CD4-positive, alpha-beta memory T cell (primary cell): ENCODE measurements at regions of chr9 and their contacts with region 1.

Region 1: GRCh38 chr9:21031091-21031807 is at the start of gene HACD4:
- DNase-seq: peak; percentile 69 to 77 (median 74)
- H3K4me3 ChIP-seq: peak within 1 kb of the TSS; percentile 74 to 85
- H3K4me3 Mint-ChIP-seq: peak within 1 kb of the TSS in 6 of 8 donors; percentile 79 to 85 (median 81)
- H3K27ac ChIP-seq: peak within 1 kb of the TSS; percentile 64
- H3K27ac Mint-ChIP-seq: peak within 1 kb of the TSS in 6 of 7 donors; percentile 76 to 93 (median 86)
- H3K4me1 ChIP-seq: peaks cover 44% of the 10 kb centered on the region
- H3K4me1 Mint-ChIP-seq: peaks cover 21 to 33% (median 27%) of the 10 kb centered on the region in 4 donors
- H3K27me3 ChIP-seq: no peaks in the 10 kb centered on the region
- H3K27me3 Mint-ChIP-seq: no peaks in the 10 kb centered on the region
- total RNA-seq, gene HACD4: 16.0 to 18.3 TPM

Region 2: GRCh38 chr9:19408693-19409400 is 1622.4 kb before region 1 on chr9 and contains the start of gene ACER2:
- CTCF ChIA-PET with region 1: no interaction called
- POLR2A ChIA-PET with region 1: no interaction called
- intact Hi-C with region 1: loop called (anchors 10 kb)
- DNase-seq: peak; percentile 91 to 97 (median 93)
- H3K4me3 ChIP-seq: peak within 1 kb of the TSS; percentile 94 to 100
- H3K4me3 Mint-ChIP-seq: peak within 1 kb of the TSS; percentile 91 to 96 (median 96)
- H3K27ac ChIP-seq: peak within 1 kb of the TSS; percentile 69
- H3K27ac Mint-ChIP-seq: peak within 1 kb of the TSS; percentile 65 to 94 (median 90)
- H3K4me1 ChIP-seq: peaks cover 23% of the 10 kb centered on the region
- H3K4me1 Mint-ChIP-seq: peaks cover 5 to 24% (median 16%) of the 10 kb centered on the region in 4 donors
- H3K27me3 ChIP-seq: no peaks in the 10 kb centered on the region
- H3K27me3 Mint-ChIP-seq: no peaks in the 10 kb centered on the region
- total RNA-seq, gene ACER2: 5.9 to 6.0 TPM

Region 3: DNA sequence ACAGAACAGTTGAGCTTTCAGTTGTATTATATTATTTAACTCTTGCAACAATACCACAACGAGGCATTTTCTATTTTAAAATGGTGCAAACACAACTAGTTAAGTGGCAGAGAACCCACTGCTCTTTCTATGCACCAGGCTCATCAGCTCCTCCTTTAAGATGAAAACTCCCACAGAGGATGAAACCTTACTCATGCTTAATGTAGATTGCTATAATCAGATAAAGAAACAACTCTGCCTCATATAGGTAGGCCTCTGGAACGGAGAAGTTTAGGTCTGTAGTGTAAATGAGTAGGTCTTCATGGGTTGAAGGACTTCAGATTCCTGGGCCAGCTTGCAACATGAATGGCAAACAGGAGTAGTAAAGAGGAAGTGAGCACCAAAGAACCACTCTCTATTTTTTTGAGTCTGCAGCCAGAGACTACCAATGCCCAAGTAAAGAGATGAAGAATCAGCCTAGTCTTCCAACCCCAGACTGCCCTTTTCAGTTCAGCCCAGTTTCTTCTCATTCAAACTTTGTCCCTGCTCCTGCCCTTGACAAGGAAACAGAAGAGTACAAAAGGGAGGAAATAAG is 33.7 kb before region 1 on chr9:
- CTCF ChIA-PET with region 1: interaction called, 5 read pairs
- POLR2A ChIA-PET with region 1: interaction called, 22 read pairs
- intact Hi-C with region 1: loop called (anchors 1 kb)
- DNase-seq: no peak
- H3K4me3 ChIP-seq: no peak overlapping the region
- H3K4me3 Mint-ChIP-seq: peak overlapping the region in 3 of 8 donors; percentile 13 to 68 (median 32)
- H3K27ac ChIP-seq: no peak overlapping the region
- H3K27ac Mint-ChIP-seq: peak overlapping the region; percentile 8 to 88 (median 76)
- H3K4me1 ChIP-seq: peaks cover 37% of the 10 kb centered on the region
- H3K4me1 Mint-ChIP-seq: peaks cover 39 to 53% (median 50%) of the 10 kb centered on the region in 4 donors
- H3K27me3 ChIP-seq: no peaks in the 10 kb centered on the region
- H3K27me3 Mint-ChIP-seq: no peaks in the 10 kb centered on the region

Region 4: DNA sequence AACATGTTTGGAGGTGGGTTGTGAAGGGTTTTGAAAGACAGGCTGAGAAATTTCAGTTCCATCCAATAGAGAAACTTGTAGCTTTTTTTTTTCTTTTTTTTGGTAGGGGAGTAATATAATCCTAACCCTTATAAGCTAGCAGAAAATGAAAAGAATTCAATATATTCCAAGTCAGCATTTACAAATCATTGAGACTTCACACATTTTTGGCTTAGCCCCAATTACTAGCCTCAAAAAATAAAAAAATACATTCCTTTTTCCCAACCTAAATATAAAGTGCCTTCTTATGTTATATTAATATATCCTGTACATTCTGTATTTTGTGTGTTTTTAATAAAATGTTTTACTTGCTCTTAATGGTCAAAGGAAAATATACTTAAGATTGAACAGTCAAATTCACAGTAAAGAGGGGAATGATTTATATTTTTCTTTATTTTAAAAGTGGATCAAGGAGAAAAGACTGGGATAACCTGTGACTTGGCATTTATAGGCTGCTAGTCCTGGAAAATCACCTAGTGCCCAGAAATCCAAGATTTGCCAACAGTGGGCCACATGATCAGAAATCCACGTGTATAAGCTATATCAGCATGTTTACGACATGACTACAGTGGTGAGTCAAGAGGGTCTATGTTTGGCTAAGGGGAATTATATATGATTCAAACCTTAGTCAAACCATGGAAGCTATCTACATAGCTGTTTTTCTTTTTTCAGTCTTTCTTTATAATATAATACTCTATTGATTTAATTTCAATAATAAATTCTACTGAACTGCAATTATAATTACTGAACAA is 14.4 kb before region 1 on chr9:
- CTCF ChIA-PET with region 1: interaction called, 4 read pairs
- POLR2A ChIA-PET with region 1: interaction called, 13 read pairs
- intact Hi-C with region 1: no loop called
- DNase-seq: no peak
- H3K4me3 ChIP-seq: no peak overlapping the region
- H3K4me3 Mint-ChIP-seq: no peak overlapping the region
- H3K27ac ChIP-seq: no peak overlapping the region
- H3K27ac Mint-ChIP-seq: peak overlapping the region in 1 of 7 donors; percentile 13
- H3K4me1 ChIP-seq: no peaks in the 10 kb centered on the region
- H3K4me1 Mint-ChIP-seq: peaks cover 12 to 25% (median 18%) of the 10 kb centered on the region in 4 donors
- H3K27me3 ChIP-seq: no peaks in the 10 kb centered on the region
- H3K27me3 Mint-ChIP-seq: no peaks in the 10 kb centered on the region

Region 5: DNA sequence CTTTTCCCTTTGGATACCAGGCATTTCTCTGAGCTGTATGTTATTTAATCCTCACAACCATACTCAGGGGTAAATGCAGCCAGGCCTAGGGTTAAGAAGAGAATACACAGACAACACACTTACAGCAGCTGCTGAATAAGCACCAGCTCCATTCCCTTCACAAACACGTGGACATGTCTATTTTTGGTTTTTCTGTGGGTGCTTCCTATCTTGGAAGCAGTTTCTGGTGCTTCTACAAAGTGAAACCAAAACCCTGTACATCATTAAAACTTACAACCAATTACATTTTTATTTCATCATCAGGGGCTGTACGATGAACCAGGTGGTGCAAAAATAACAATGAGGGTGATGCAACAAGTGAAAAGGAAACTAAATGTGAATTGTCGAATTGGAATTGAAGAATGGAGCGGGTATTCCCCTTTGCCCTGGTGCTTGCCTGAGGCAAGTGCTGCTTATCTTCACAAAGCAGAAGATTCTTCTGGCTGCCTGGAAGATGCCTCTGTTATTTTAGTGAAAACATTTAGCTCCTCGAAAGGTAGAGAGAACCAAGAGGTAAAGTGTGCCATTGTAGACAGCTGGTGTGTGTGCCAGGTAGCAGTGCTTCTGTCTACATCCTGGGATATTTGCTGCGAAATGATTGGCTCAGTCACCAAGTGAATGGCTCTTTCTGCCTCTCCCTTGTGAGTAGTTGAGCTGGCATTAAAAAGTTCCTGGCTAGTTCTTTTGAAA is 65.1 kb after region 1 on chr9:
- CTCF ChIA-PET with region 1: interaction called, 3 read pairs
- POLR2A ChIA-PET with region 1: interaction called, 12 read pairs
- intact Hi-C with region 1: loop called (anchors 5 kb)
- DNase-seq: peak; percentile 65 to 81 (median 73)
- H3K4me3 ChIP-seq: peak overlapping the region; percentile 7 to 57
- H3K4me3 Mint-ChIP-seq: peak overlapping the region; percentile 56 to 83 (median 74)
- H3K27ac ChIP-seq: peak overlapping the region; percentile 50
- H3K27ac Mint-ChIP-seq: peak overlapping the region; percentile 83 to 92 (median 90)
- H3K4me1 ChIP-seq: peaks cover 27% of the 10 kb centered on the region
- H3K4me1 Mint-ChIP-seq: peaks cover 28 to 52% (median 36%) of the 10 kb centered on the region in 4 donors
- H3K27me3 ChIP-seq: no peaks in the 10 kb centered on the region
- H3K27me3 Mint-ChIP-seq: no peaks in the 10 kb centered on the region